ENCODE measurements at regions of chr1 and their contacts with region 1.

Region 1: GRCh38 chr1:3717715-3718601 is 34.3 kb upstream of the CCDC27 start:
- DNase-seq: no peak
- ATAC-seq: peak; percentile 3 to 10
- H3K4me3 ChIP-seq: no peak overlapping the region
- H3K27ac ChIP-seq: no peak overlapping the region
- H3K4me1 ChIP-seq: peaks cover 2% of the 10 kb centered on the region
- H3K27me3 ChIP-seq: no peaks in the 10 kb centered on the region

Region 2: GRCh38 chr1:3453203-3453761 is 264.7 kb before region 1 on chr1:
- intact Hi-C with region 1: loop called in 1 of 4 experiments (anchors 10 kb)
- DNase-seq: peak; percentile 73 to 90 (median 89)
- ATAC-seq: peak; percentile 66 to 83
- H3K4me3 ChIP-seq: no peak overlapping the region
- H3K27ac ChIP-seq: no peak overlapping the region
- H3K4me1 ChIP-seq: no peaks in the 10 kb centered on the region
- H3K27me3 ChIP-seq: no peaks in the 10 kb centered on the region

Measured in right cardiac atrium (tissue), 5 donors.